ENCODE measurements at regions of chr1 and their contacts with region 1.

Region 1: GRCh38 chr1:17569200-17570161 is 30.0 kb downstream of the ARHGEF10L start:
- DNase-seq: peak; percentile 76 to 89
- ATAC-seq: peak; percentile 80 to 89 (median 84)
- H3K4me3 ChIP-seq: peak overlapping the region in 3 of 10 donors; percentile 16 to 26 (median 18)
- H3K27ac ChIP-seq: peak overlapping the region; percentile 85 to 98 (median 94)
- H3K4me1 ChIP-seq: peaks cover 43 to 98% (median 75%) of the 10 kb centered on the region in 9 donors
- H3K27me3 ChIP-seq: no peaks in the 10 kb centered on the region
- CTCF ChIP-seq: no peak

Region 2: DNA sequence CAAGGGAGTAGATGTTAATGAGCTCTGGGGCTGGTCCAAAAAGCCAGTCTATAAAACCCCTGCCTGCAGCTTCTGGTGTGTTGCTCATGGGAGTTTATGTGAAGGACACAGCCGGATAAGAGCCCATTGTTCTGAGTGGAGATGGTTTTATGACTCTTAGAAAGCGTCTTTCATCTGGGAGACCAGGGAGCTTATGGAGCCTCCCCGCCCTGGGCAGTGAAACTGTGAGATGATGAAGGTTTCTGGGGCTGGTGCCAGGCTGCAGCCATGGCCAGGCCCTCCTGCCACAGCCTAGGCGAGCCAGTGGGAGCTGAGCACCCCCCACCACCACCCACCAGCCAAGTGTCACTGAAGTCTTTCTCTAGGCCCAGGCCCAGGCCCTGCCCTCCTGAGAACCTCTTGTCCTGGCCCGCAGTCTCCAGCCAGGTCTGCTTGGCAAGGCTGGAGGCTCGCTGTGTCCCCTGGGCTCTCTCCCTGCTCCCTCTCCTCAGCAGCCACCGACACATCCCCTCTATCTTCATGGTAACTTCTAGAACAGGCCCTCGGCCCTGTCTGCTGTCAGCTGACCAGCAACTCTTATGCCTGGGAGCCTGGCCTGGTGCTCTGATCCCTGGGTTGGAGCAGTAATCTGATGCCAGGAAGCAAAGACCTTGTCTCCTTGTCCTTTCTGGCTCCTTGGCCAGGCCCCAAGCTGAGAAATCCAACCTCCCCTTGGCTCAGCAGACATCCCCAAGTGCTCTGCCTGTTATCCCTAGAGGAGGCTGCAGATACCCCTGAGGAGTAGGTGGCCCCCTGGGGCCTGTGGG is 37.6 kb before region 1 on chr1:
- intact Hi-C with region 1: loop called in 1 of 10 experiments (anchors 5 kb)
- DNase-seq: peak; percentile 68 to 79
- ATAC-seq: peak; percentile 82 to 98 (median 91)
- H3K4me3 ChIP-seq: no peak overlapping the region
- H3K27ac ChIP-seq: peak overlapping the region; percentile 70 to 89 (median 80)
- H3K4me1 ChIP-seq: peaks cover 3 to 37% (median 15%) of the 10 kb centered on the region in 9 donors
- H3K27me3 ChIP-seq: no peaks in the 10 kb centered on the region
- CTCF ChIP-seq: no peak